Left ventricle myocardium superior (tissue), 1 donor: ENCODE measurements at regions of chr3 and their contacts with region 1.

Region 1: GRCh38 chr3:44198284-44199269 is 43.1 kb upstream of the TOPAZ1 start:
- DNase-seq: peak; percentile 45
- ATAC-seq: peak; percentile 74

Region 2: GRCh38 chr3:43540624-43541023 is 658.0 kb before region 1 on chr3:
- intact Hi-C with region 1: loop called (anchors 10 kb)
- DNase-seq: no peak
- ATAC-seq: no peak